Heart left ventricle (tissue), 16 donors: ENCODE measurements at regions of chr18 and their contacts with region 1.

Region 1: DNA sequence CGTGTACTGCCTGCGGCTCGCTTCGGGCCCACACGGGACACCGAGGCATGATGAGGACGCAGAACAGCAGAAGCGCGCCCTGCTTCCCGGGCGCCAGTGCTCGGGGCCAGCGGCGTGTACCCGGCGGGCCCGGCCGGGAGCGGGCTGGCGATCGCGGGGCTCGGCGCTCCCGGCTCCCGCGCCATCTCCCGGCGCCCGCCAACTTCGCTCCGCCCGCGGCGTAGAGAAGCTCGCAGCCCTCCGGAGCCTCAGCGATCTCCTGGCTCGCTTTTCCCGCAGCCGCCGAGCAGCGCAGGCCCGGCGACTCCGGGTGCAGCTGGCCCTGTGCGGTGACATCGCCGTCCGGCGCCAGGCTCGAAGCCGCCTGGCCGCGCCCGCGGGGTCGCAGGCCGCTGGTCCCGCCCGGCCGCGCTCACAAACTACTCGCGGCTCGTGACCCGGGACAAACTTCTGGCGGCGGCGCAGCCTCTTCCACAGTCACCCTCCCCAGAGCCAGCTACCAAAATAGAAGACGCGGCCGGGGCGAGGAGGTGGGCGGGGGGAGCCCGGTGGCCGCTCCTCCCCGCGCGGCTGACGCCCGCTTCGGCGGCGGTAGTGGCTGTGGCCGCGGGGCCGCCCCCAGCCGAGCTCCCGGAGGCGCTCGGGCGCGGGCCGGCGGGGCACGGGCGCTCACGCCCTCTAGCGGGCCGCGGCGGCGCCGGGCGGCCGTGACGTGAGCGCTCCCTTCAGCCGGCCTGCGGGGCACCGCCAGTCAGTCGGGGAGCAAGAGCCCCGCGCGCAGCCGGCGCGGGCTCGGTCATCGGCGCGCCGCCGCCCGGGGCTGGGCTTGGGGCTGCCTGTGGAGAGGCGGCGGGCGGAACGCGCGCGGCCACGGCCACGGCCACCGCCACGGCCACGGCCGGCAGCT is at the start of gene PTPRM:
- DNase-seq: peak; percentile 93 to 96 (median 95)
- ATAC-seq: peak; percentile 86 to 94 (median 92)
- H3K4me3 ChIP-seq: peak within 1 kb of the TSS; percentile 59 to 99 (median 92)
- H3K27ac ChIP-seq: peak within 1 kb of the TSS; percentile 95 to 100 (median 99)
- H3K4me1 ChIP-seq: peaks cover 0 to 50% (median 36%) of the 10 kb centered on the region in 12 donors
- H3K27me3 ChIP-seq: peaks cover 0 to 32% (median 0%) of the 10 kb centered on the region in 9 donors
- CTCF ChIP-seq: peak in 8 of 12 donors; percentile 32 to 86 (median 54)
- POLR2A ChIP-seq: peak; percentile 21 to 89
- total RNA-seq, gene PTPRM: 103 to 186 (median 132) TPM

Region 2: GRCh38 chr18:7221424-7222155 is 345.2 kb before region 1 on chr18:
- intact Hi-C with region 1: loop called in 1 of 10 experiments (anchors 2 kb)
- DNase-seq: peak in 4 of 5 donors; percentile 40 to 49 (median 42)
- ATAC-seq: peak; percentile 64 to 91 (median 90)
- H3K4me3 ChIP-seq: no peak overlapping the region
- H3K27ac ChIP-seq: no peak overlapping the region
- H3K4me1 ChIP-seq: no peaks in the 10 kb centered on the region
- H3K27me3 ChIP-seq: no peaks in the 10 kb centered on the region
- CTCF ChIP-seq: peak; percentile 62 to 79 (median 72)
- POLR2A ChIP-seq: no peak

Region 3: DNA sequence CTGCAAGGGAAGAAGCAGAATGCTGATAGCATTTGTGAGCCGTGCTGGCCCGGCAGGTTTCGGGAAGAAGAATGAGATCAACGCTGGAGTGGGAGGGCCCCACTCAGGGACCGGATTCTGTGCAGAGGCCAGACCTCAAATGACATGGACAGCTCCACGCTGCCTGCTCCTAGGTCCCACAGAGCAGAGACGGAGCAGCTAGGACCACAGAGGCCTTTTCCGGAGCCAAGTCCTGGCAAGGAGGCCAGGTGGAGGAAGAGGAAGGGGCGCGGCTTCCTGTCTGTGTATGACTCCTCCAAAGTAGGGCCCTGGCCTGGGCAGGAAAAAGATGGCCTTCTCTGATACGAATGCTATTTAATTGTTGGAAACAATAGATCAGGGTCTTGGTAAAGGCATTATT is 196.0 kb before region 1 on chr18:
- intact Hi-C with region 1: loop called in 8 of 10 experiments (anchors 1 to 5 kb)
- DNase-seq: peak; percentile 81 to 90 (median 87)
- ATAC-seq: peak; percentile 83 to 93 (median 92)
- H3K4me3 ChIP-seq: peak overlapping the region in 2 of 12 donors; percentile 7 to 22
- H3K27ac ChIP-seq: peak overlapping the region in 11 of 12 donors; percentile 76 to 96 (median 88)
- H3K4me1 ChIP-seq: peaks cover 0 to 74% (median 37%) of the 10 kb centered on the region in 12 donors
- H3K27me3 ChIP-seq: no peaks in the 10 kb centered on the region
- CTCF ChIP-seq: no peak
- POLR2A ChIP-seq: no peak

Region 4: DNA sequence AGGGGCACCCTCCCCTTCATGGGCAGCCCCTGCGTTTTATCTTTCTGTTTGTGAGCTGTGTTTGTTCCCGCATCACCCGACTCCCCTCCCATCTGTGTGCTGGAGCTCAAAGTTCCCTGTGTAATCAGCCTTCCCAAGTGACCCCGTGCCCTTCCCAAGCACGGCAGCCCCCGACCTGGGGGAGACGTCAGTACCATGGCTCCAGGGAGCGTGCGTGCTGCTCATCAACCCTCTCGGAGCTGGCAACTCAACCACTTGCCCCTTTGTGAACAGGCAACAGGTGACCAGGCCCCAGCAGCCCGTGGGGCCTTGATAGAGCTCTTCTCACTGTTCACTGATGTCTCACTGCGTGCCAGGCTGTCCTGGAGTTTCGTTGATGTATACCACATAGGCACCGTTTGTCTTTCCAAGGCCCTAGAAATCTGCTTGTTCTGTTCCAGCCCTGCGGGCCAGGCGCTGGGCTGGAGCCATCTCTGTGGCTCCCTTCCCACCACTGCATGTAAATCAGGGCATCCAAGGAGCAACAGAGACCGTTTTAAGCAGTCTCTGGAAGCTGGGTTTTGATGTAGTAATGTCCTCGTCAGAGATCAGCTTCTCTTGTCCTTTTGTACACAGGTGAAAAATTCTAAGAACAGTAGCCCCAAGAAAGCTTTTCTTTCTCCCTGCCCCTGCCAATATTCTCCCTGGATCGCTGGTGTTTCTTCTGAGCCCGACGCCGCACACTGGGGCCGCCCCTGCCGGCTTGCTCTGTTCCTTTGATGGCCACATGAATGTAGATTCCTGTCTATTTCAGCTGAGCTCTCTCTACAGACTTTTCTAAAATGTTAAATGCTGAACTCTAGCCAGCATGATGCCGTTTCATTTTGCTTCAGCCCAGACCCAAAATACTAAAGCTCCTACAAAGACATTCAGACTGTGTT is 106.7 kb before region 1 on chr18:
- intact Hi-C with region 1: loop called in 5 of 10 experiments (anchors 2 to 10 kb)
- DNase-seq: peak; percentile 21 to 64 (median 42)
- ATAC-seq: peak; percentile 16 to 87 (median 46)
- H3K4me3 ChIP-seq: peak overlapping the region in 8 of 12 donors; percentile 13 to 51 (median 28)
- H3K27ac ChIP-seq: peak overlapping the region; percentile 12 to 85 (median 51)
- H3K4me1 ChIP-seq: peaks cover 0 to 40% (median 12%) of the 10 kb centered on the region in 12 donors
- H3K27me3 ChIP-seq: no peaks in the 10 kb centered on the region
- CTCF ChIP-seq: no peak
- POLR2A ChIP-seq: no peak

Region 5: DNA sequence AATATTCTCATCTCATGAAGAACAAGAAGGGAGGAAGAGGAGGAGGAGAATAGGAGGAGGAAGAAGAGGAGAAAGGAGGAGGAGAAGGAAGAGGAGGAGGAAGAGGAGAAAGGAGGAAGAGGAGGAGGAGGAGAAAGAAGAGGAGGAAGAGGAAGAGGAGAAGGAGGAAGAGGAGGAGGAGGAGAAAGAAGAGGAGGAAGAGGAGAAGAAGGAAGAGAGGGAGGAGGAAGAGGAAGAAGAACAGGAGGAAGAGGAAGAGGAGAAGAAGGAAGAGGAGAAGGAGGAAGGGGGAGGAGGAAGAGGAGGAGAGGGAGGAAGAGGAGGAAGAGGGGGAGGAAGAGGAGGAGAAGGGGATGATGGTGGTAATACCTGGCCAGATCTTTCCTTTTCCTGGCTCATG is 69.7 kb before region 1 on chr18:
- intact Hi-C with region 1: no loop called
- DNase-seq: no peak
- ATAC-seq: no peak
- H3K4me3 ChIP-seq: no peak overlapping the region
- H3K27ac ChIP-seq: no peak overlapping the region
- H3K4me1 ChIP-seq: no peaks in the 10 kb centered on the region
- H3K27me3 ChIP-seq: no peaks in the 10 kb centered on the region
- CTCF ChIP-seq: no peak
- POLR2A ChIP-seq: no peak

Region 6: GRCh38 chr18:7755753-7756475 is 189.1 kb after region 1 on chr18:
- intact Hi-C with region 1: loop called in 7 of 10 experiments (anchors 2 to 10 kb)
- DNase-seq: no peak
- ATAC-seq: peak; percentile 41 to 52 (median 48)
- H3K4me3 ChIP-seq: no peak overlapping the region
- H3K27ac ChIP-seq: peak overlapping the region in 3 of 12 donors; percentile 32 to 58 (median 42)
- H3K4me1 ChIP-seq: peaks cover 0 to 91% (median 41%) of the 10 kb centered on the region in 12 donors
- H3K27me3 ChIP-seq: no peaks in the 10 kb centered on the region
- CTCF ChIP-seq: peak in 11 of 12 donors; percentile 14 to 58 (median 37)
- POLR2A ChIP-seq: no peak

Region 7: GRCh38 chr18:8140841-8141501 is 574.2 kb after region 1 on chr18:
- intact Hi-C with region 1: loop called in 1 of 10 experiments (anchors 5 kb)
- DNase-seq: peak in 3 of 5 donors; percentile 27 to 87 (median 40)
- ATAC-seq: peak; percentile 81 to 88 (median 86)
- H3K4me3 ChIP-seq: no peak overlapping the region
- H3K27ac ChIP-seq: peak overlapping the region in 11 of 12 donors; percentile 36 to 84 (median 74)
- H3K4me1 ChIP-seq: peaks cover 9 to 57% (median 44%) of the 10 kb centered on the region in 12 donors
- H3K27me3 ChIP-seq: no peaks in the 10 kb centered on the region
- CTCF ChIP-seq: no peak
- POLR2A ChIP-seq: no peak